ENCODE measurements at regions of chr6 and their contacts with region 1.

Region 1: DNA sequence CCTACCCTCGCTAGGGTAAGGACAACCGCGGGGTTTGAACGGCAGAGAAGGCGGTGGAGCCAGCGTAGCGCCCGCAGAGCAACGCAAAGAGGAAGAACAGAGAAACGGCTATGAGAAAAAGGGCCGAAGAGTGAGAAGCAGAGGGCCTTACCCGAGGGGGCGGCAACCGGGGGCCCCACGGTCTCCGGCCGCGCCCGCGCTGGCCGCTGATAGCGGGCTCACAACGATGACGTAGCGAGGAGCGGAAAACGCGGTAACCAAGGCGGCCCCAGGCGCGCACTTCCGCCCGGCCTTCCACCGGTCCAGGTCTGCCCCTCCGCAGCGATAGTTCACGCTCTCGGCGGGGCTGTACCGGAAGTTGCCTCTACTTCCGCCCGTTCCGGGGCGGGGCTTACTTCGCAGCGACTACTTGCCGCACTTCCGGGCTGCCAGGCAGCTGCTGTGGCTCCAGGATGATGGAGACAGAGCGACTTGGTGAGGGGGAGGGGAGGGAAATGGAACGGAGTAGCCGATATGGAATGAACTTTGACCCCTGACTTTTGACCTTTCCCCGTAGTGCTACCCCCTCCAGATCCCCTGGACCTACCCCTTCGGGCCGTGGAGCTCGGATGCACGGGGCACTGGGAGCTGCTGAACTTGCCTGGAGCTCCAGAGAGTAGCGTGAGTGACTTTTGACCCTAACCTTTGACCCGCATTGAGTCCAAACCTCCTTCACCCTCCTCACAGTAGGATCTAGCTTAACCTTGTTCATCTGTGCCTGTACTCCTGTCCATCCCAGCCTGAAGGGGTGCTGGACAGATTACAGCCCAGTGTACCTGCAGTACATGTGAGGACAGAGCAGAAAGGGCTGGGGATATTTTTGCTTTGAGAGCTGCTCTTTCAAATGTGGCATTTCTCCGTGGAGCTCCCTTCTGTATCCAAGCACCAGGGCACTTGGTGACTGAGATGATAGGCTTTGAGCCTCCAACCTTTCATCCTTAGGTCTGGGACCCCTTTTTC is at the starts of genes NELFE and SKIC2:
- DNase-seq: peak; percentile 99
- H3K4me3 Mint-ChIP-seq: peak within 1 kb of the TSS; percentile 98
- H3K27ac Mint-ChIP-seq: peak within 1 kb of the TSS; percentile 98
- H3K4me1 Mint-ChIP-seq: peaks cover 46% of the 10 kb centered on the region
- H3K27me3 Mint-ChIP-seq: no peaks in the 10 kb centered on the region
- total RNA-seq, gene NELFE: 92.3 and 97.7 TPM in 2 replicates
- total RNA-seq, gene SKIC2: 85.8 and 101 TPM in 2 replicates

Region 2: DNA sequence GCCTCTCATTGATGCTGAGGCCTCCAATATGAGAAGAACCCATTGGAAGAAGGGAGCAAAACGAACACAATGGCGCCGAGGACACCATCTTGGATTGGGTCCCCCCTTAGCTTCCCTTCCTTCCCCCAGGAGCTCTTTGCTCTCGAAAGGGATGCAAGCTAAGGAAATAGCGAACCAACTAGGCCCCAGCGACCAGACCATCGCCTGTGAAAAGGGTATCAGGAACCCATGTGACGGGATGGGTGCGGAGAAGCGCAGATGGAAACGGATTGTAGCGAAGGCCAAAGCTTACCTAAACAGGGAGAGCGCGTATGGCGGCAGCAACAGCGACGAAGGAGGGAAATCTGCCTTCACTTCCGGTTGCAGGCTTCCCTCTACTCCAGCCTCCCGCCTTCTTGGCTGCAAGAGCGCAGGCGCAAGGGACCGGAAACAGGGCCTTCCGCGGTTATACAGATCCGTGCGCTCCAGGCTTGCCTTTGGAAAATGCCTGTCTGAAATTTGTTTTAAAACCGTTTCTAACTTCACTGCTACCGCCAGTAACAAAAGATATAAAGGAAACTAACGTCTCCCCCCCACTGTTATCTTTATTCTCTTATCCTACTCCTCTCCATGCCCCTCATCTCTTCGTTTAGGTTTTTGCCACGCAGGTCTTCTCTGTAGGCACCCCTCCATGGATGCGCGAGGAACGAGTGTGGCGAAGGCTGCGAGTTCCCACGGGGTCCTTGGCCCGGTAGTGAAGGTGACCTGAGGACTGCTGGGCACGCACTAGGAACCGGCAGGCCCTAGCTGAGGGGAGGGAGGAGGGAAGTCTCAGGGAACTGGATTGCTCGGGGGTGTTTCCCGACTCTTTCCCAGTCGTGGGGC is 417.1 kb before region 1 on chr6 and contains the start of gene DDX39B:
- intact Hi-C with region 1: loop called (anchors 10 kb)
- DNase-seq: peak; percentile 92
- H3K4me3 Mint-ChIP-seq: peak within 1 kb of the TSS; percentile 100
- H3K27ac Mint-ChIP-seq: peak within 1 kb of the TSS; percentile 97
- H3K4me1 Mint-ChIP-seq: peaks cover 41% of the 10 kb centered on the region
- H3K27me3 Mint-ChIP-seq: peaks cover 3% of the 10 kb centered on the region
- total RNA-seq, gene DDX39B: 628 and 637 TPM in 2 replicates

Region 3: GRCh38 chr6:31862344-31863227 is 96.5 kb before region 1 on chr6 and contains the start of gene NEU1:
- intact Hi-C with region 1: loop called (anchors 1 kb)
- DNase-seq: peak; percentile 99
- H3K4me3 Mint-ChIP-seq: peak within 1 kb of the TSS; percentile 97
- H3K27ac Mint-ChIP-seq: peak within 1 kb of the TSS; percentile 94
- H3K4me1 Mint-ChIP-seq: peaks cover 37% of the 10 kb centered on the region
- H3K27me3 Mint-ChIP-seq: peaks cover 3% of the 10 kb centered on the region
- total RNA-seq, gene NEU1: 22.1 and 24.3 TPM in 2 replicates

Region 4: GRCh38 chr6:31908791-31909190 is 50.2 kb before region 1 on chr6:
- intact Hi-C with region 1: no loop called
- DNase-seq: no peak
- H3K4me3 Mint-ChIP-seq: no peak overlapping the region
- H3K27ac Mint-ChIP-seq: no peak overlapping the region
- H3K4me1 Mint-ChIP-seq: peaks cover 14% of the 10 kb centered on the region
- H3K27me3 Mint-ChIP-seq: no peaks in the 10 kb centered on the region

Region 5: GRCh38 chr6:31971993-31972708 is 13.1 kb after region 1 on chr6 and contains the start of gene DXO:
- intact Hi-C with region 1: loop called (anchors 1 kb)
- DNase-seq: peak; percentile 97
- H3K4me3 Mint-ChIP-seq: peak within 1 kb of the TSS; percentile 80
- H3K27ac Mint-ChIP-seq: peak within 1 kb of the TSS; percentile 100
- H3K4me1 Mint-ChIP-seq: peaks cover 34% of the 10 kb centered on the region
- H3K27me3 Mint-ChIP-seq: no peaks in the 10 kb centered on the region
- total RNA-seq, gene DXO: 14.1 and 15.2 TPM in 2 replicates

Region 6: GRCh38 chr6:32195652-32195901 is 236.5 kb after region 1 on chr6:
- intact Hi-C with region 1: loop called (anchors 5 kb)
- DNase-seq: peak; percentile 100
- H3K4me3 Mint-ChIP-seq: peak overlapping the region; percentile 97
- H3K27ac Mint-ChIP-seq: peak overlapping the region; percentile 98
- H3K4me1 Mint-ChIP-seq: peaks cover 48% of the 10 kb centered on the region
- H3K27me3 Mint-ChIP-seq: peaks cover 2% of the 10 kb centered on the region

Measured in activated T-helper 1 cell treated with anti-CD3 and anti-CD28 coated beads, Interleukin-12 subunit alpha, Interleukin-12 subunit beta, Interleukin-2, Interleukin-4 antibody, amounts not matched to agents 30 ng/mL and 10 ng/mL and 1 ng/mL, durations not matched to agents 14 hours and 24 hours and 36 hours (primary cell).